Heart left ventricle (tissue), 16 donors: ENCODE measurements at regions of chr10 and their contacts with region 1.

Region 1: DNA sequence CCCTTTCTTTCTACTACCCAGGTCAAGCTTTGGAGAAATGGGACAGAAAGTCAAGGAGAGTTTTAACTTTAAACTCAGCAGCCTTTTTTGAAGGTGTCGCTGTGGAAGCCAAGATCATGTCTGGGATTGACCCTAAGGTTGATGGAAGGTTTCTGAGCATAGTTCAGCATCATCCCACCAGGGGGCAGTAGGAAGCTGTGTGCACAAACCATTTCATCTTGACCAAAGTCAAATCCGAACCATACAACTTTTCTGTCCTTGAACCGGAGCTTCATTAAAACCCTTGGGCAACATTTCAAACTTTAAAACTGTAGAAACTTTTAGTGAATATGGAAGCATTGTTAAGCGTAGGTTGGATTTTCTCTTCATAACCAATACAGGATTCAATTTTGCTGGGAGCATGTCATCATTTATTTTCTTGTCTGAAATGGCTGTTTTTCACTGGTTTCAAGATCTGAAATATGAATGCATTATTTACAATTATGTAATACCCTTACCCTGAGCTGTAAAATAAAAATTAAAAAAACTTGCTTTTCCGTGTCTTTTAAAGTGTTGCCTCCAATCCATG is 214.4 kb upstream of the KIAA1217 start:
- DNase-seq: peak in 4 of 5 donors; percentile 40 to 64 (median 58)
- ATAC-seq: peak in 3 of 4 donors; percentile 73 to 80 (median 77)
- H3K4me3 ChIP-seq: peak overlapping the region in 2 of 12 donors; percentile 12 to 14
- H3K27ac ChIP-seq: no peak overlapping the region
- H3K4me1 ChIP-seq: peaks cover 0 to 8% (median 1%) of the 10 kb centered on the region in 12 donors
- H3K27me3 ChIP-seq: no peaks in the 10 kb centered on the region
- CTCF ChIP-seq: peak; percentile 75 to 95 (median 90)
- POLR2A ChIP-seq: no peak

Region 2: GRCh38 chr10:23158370-23158769 is 836.2 kb before region 1 on chr10:
- intact Hi-C with region 1: loop called in 1 of 10 experiments (anchors 10 kb)
- DNase-seq: no peak
- ATAC-seq: peak in 3 of 4 donors; percentile 70 to 80 (median 74)
- H3K4me3 ChIP-seq: no peak overlapping the region
- H3K27ac ChIP-seq: no peak overlapping the region
- H3K4me1 ChIP-seq: peaks cover 0 to 5% (median 0%) of the 10 kb centered on the region in 12 donors
- H3K27me3 ChIP-seq: peaks cover 0 to 26% (median 5%) of the 10 kb centered on the region in 9 donors
- CTCF ChIP-seq: peak; percentile 62 to 83 (median 74)
- POLR2A ChIP-seq: no peak

Region 3: GRCh38 chr10:23481411-23481961 is 513.1 kb before region 1 on chr10:
- intact Hi-C with region 1: no loop called
- DNase-seq: no peak
- ATAC-seq: no peak
- H3K4me3 ChIP-seq: no peak overlapping the region
- H3K27ac ChIP-seq: no peak overlapping the region
- H3K4me1 ChIP-seq: no peaks in the 10 kb centered on the region
- H3K27me3 ChIP-seq: no peaks in the 10 kb centered on the region
- CTCF ChIP-seq: no peak
- POLR2A ChIP-seq: no peak

Region 4: GRCh38 chr10:23656735-23657134 is 337.8 kb before region 1 on chr10:
- intact Hi-C with region 1: no loop called
- DNase-seq: no peak
- ATAC-seq: no peak
- H3K4me3 ChIP-seq: no peak overlapping the region
- H3K27ac ChIP-seq: no peak overlapping the region
- H3K4me1 ChIP-seq: no peaks in the 10 kb centered on the region
- H3K27me3 ChIP-seq: peaks cover 0 to 11% (median 0%) of the 10 kb centered on the region in 9 donors
- CTCF ChIP-seq: peak in 11 of 12 donors; percentile 21 to 55 (median 45)
- POLR2A ChIP-seq: no peak

Region 5: GRCh38 chr10:24118246-24118645 is 123.7 kb after region 1 on chr10:
- intact Hi-C with region 1: loop called in 1 of 10 experiments (anchors 10 kb)
- DNase-seq: peak in 1 of 5 donors; percentile 33
- ATAC-seq: peak; percentile 27 to 74 (median 42)
- H3K4me3 ChIP-seq: peak overlapping the region in 11 of 12 donors; percentile 12 to 49 (median 40)
- H3K27ac ChIP-seq: peak overlapping the region in 11 of 12 donors; percentile 33 to 75 (median 60)
- H3K4me1 ChIP-seq: peaks cover 3 to 26% (median 19%) of the 10 kb centered on the region in 12 donors
- H3K27me3 ChIP-seq: no peaks in the 10 kb centered on the region
- CTCF ChIP-seq: no peak
- POLR2A ChIP-seq: peak in 1 of 2 donors; percentile 20

Region 6: GRCh38 chr10:24238519-24239252 is 244.1 kb after region 1 on chr10:
- intact Hi-C with region 1: no loop called
- DNase-seq: no peak
- ATAC-seq: no peak
- H3K4me3 ChIP-seq: no peak overlapping the region
- H3K27ac ChIP-seq: no peak overlapping the region
- H3K4me1 ChIP-seq: peaks cover 0 to 56% (median 19%) of the 10 kb centered on the region in 12 donors
- H3K27me3 ChIP-seq: no peaks in the 10 kb centered on the region
- CTCF ChIP-seq: no peak
- POLR2A ChIP-seq: no peak

Region 7: DNA sequence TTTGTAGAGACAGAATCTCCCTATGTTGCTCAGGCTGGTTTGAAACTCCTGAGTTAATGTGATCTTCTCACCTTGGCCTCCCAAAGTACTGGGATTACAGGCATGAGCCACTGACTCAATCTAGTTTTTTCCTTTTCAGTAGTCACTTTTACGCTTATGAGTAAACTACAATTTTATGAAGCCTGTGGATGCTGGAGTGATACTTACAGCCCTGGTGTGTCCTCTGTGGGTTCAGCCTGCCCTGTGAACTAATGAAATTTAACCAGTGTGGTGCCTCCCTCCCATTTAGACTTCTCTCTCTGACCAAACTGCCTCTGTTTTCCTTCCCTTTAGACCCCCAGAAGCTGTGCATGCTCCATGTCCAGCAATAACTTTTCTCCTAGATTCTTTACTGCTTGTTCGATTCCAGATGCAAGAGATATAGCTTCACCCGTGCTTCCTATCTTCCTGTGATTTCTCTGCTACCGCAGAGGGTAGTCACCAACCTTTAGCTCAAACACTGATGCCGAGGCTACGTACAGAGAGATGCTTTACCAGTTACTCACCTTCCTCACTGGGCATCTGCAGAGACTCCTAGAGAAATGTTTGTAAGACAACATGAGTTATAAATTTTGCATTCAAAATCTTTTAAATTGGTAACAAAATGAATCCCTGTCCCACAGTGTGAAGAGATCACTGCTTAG is 305.2 kb after region 1 on chr10:
- intact Hi-C with region 1: loop called in 1 of 10 experiments (anchors 10 kb)
- DNase-seq: no peak
- ATAC-seq: no peak
- H3K4me3 ChIP-seq: no peak overlapping the region
- H3K27ac ChIP-seq: no peak overlapping the region
- H3K4me1 ChIP-seq: peaks cover 0 to 27% (median 2%) of the 10 kb centered on the region in 12 donors
- H3K27me3 ChIP-seq: no peaks in the 10 kb centered on the region
- CTCF ChIP-seq: no peak
- POLR2A ChIP-seq: no peak

Region 8: DNA sequence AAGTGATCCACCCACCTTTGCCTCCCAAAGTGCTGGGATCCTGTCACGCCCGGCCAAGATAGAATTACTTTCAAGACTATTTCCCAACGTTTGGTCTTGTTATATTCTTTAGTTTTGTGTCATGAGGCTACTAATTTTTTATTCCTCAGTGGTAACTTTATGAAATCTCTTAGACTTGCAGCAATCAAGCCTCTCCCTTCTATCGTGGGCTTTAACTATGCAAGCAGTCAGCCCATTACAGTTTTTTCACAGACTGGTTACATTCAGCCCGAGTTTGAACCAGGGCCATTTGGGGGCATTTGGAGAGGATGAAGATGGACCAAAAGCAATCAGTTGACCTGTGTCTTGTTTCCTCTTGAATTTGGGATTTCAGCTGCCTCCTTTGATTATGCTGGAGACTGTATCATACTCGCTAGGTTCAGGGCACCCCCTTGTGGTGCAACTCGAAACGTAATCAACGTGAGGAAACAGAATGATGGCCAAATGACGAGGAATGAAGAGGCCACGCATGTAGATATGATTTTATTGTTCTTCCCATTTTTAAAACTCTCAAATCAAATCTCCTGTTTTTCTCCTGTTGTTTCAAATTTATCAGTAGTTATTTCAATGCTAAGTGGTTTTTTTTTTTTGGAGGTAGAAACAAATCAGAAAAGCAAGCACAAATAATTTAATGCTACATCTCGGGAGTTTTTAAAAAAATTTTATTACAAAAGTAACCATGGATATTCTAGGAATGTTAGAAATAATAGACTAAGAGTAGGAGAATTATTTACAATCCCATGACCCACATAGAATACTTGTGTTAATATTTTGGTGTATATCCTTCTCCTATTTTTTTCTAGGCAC is 365.9 kb after region 1 on chr10:
- intact Hi-C with region 1: loop called (anchors 1 to 5 kb)
- DNase-seq: peak in 4 of 5 donors; percentile 67 to 75 (median 69)
- ATAC-seq: peak in 3 of 4 donors; percentile 60 to 83 (median 78)
- H3K4me3 ChIP-seq: no peak overlapping the region
- H3K27ac ChIP-seq: no peak overlapping the region
- H3K4me1 ChIP-seq: peaks cover 0 to 18% (median 3%) of the 10 kb centered on the region in 12 donors
- H3K27me3 ChIP-seq: no peaks in the 10 kb centered on the region
- CTCF ChIP-seq: peak; percentile 49 to 85 (median 75)
- POLR2A ChIP-seq: no peak

Region 9: DNA sequence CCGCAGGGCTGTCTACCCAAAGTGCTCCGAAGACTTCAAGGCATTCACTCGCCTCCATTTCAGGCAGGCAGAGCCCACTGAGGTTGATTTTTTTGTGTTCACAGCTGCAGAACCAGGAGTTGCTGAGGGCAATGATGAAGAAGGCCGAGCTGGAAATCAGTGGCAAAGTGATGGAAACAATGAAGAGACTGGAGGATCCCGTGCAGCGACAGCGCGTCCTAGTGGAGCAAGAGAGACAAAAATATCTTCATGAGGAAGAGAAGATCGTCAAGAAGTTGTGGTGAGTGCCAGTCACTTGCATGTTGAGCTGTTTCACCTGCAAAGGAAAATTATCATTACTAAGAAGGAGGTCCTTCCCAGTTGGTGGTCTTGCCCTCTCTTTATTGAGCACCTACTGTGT is 518.6 kb after region 1 on chr10:
- intact Hi-C with region 1: loop called (anchors 2 to 10 kb)
- DNase-seq: no peak
- ATAC-seq: no peak
- H3K4me3 ChIP-seq: no peak overlapping the region
- H3K27ac ChIP-seq: no peak overlapping the region
- H3K4me1 ChIP-seq: no peaks in the 10 kb centered on the region
- H3K27me3 ChIP-seq: no peaks in the 10 kb centered on the region
- CTCF ChIP-seq: peak in 6 of 12 donors; percentile 12 to 38 (median 26)
- POLR2A ChIP-seq: no peak

Region 10: DNA sequence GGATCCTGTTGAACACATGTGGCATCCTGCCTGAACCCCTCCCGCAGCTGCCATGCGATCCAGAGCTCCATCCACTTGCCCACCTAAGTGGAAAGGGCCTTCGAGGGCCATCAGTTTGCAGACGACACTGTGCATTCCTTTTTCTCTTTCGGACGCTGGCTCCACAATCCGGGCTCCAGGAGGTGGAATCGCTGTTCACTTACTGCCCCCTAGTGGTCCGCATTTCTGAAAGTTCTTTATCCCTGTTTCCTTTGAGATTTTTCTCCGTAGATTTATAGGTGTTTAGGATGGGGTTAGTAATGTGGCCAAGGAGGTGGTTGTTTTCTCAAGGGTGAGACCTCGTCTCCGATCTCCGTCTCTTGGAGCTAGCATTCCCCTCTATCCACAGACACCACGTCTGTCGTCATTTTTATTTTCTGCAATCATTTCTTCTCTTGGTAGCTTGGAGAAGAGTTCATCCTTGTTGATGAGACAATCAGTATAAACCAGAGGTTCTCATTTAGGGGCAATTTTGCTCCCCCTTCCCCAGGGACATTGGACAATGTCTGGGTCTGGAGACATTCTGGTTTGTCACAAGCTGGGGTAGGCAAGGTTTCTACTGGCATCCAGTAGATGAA is 524.5 kb after region 1 on chr10:
- intact Hi-C with region 1: loop called in 8 of 10 experiments (anchors 2 to 10 kb)
- DNase-seq: peak in 4 of 5 donors; percentile 46 to 69 (median 60)
- ATAC-seq: peak; percentile 40 to 82 (median 66)
- H3K4me3 ChIP-seq: no peak overlapping the region
- H3K27ac ChIP-seq: no peak overlapping the region
- H3K4me1 ChIP-seq: peaks cover 0 to 10% (median 2%) of the 10 kb centered on the region in 12 donors
- H3K27me3 ChIP-seq: no peaks in the 10 kb centered on the region
- CTCF ChIP-seq: peak; percentile 62 to 84 (median 74)
- POLR2A ChIP-seq: no peak